Activated B cell treated with CpG ODN at 0.5 μM for 24 hours (primary cell): ENCODE measurements at regions of chr10 and their contacts with region 1.

Region 1: DNA sequence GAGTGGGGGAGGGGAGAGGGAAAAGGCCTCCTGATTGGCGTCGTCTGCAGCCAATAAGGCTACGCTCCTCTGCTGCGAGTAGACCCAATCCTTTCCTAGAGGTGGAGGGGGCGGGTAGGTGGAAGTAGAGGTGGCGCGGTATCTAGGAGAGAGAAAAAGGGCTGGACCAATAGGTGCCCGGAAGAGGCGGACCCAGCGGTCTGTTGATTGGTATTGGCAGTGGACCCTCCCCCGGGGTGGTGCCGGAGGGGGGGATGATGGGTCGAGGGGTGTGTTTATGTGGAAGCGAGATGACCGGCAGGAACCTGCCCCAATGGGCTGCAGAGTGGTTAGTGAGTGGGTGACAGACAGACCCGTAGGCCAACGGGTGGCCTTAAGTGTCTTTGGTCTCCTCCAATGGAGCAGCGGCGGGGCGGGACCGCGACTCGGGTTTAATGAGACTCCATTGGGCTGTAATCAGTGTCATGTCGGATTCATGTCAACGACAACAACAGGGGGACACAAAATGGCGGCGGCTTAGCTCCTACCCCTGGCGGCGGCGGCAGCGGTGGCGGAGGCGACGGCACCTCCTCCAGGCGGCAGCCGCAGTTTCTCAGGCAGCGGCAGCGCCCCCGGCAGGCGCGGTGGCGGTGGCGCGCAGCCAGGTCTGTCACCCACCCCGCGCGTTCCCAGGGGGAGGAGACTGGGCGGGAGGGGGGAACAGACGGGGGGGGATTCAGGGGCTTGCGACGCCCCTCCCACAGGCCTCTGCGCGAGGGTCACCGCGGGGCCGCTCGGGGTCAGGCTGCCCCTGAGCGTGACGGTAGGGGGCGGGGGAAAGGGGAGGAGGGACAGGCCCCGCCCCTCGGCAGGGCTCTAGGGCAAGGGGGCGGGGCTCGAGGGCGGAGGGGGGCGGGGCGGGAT is at the start of gene KAT6B:
- DNase-seq: peak; percentile 98
- ATAC-seq: peak; percentile 81
- H3K4me3 Mint-ChIP-seq: peak within 1 kb of the TSS; percentile 88
- H3K27ac Mint-ChIP-seq: peak within 1 kb of the TSS; percentile 96
- H3K4me1 Mint-ChIP-seq: peaks cover 44% of the 10 kb centered on the region
- H3K27me3 Mint-ChIP-seq: no peaks in the 10 kb centered on the region
- CTCF ChIP-seq: no peak
- total RNA-seq, gene KAT6B: 39.6 and 45.2 TPM in 2 replicates

Region 2: DNA sequence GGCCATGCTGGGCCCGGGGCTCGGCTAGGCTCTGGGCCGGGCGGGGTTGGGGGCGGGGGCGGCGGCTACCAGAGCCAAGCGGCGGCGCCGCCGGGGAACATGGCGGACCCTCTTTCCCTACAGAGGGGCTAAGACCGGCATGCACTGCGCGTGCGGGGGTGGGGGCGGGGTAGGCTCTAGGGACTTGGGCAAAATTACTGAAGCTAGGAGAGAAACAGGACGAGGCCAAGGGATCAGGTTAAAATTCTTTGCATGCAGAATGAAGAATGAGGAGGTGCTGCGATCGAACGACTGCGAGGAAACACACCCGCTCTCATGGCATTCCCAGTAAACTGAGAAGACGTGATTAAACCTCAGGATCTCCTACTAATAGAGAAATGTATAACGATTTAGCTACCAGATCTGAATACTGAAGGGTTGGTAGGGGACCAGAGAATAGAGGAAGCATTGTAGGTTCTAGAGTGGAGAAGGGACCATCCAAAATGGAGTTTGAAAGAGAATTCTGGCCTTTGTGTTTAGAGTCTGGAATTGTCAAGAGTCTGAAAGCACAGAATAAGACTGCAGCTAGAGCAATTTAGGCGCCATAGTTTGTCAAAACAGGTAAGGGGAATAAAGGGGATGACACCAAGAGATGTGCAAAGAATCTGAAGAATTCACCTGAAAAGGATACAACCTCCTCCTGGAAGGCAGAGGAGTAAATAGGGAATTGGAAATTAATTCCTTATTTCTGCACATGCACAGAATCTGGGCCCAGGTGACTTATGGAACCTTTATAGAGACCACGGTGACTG is 1330.3 kb before region 1 on chr10 and contains the start of gene PPP3CB:
- CTCF ChIA-PET with region 1: no interaction called
- POLR2A ChIA-PET with region 1: no interaction called
- intact Hi-C with region 1: loop called (anchors 10 kb)
- DNase-seq: no peak
- ATAC-seq: peak; percentile 73
- H3K4me3 Mint-ChIP-seq: peak within 1 kb of the TSS; percentile 92
- H3K27ac Mint-ChIP-seq: peak within 1 kb of the TSS; percentile 96
- H3K4me1 Mint-ChIP-seq: peaks cover 52% of the 10 kb centered on the region
- H3K27me3 Mint-ChIP-seq: no peaks in the 10 kb centered on the region
- CTCF ChIP-seq: no peak
- total RNA-seq, gene PPP3CB: 41.4 and 43.3 TPM in 2 replicates

Region 3: GRCh38 chr10:73997787-73998622 is 828.4 kb before region 1 on chr10 and contains the start of gene VCL:
- CTCF ChIA-PET with region 1: no interaction called
- POLR2A ChIA-PET with region 1: no interaction called
- intact Hi-C with region 1: loop called (anchors 5 kb)
- DNase-seq: peak; percentile 91
- ATAC-seq: peak; percentile 97
- H3K4me3 Mint-ChIP-seq: peak within 1 kb of the TSS; percentile 96
- H3K27ac Mint-ChIP-seq: peak within 1 kb of the TSS; percentile 95
- H3K4me1 Mint-ChIP-seq: peaks cover 45% of the 10 kb centered on the region
- H3K27me3 Mint-ChIP-seq: no peaks in the 10 kb centered on the region
- CTCF ChIP-seq: no peak
- total RNA-seq, gene VCL: 21.3 and 25.8 TPM in 2 replicates

Region 4: GRCh38 chr10:74262856-74263255 is 563.5 kb before region 1 on chr10:
- CTCF ChIA-PET with region 1: no interaction called
- POLR2A ChIA-PET with region 1: interaction called, 11 read pairs
- intact Hi-C with region 1: loop called (anchors 10 kb)
- DNase-seq: no peak
- ATAC-seq: no peak
- H3K4me3 Mint-ChIP-seq: no peak overlapping the region
- H3K27ac Mint-ChIP-seq: no peak overlapping the region
- H3K4me1 Mint-ChIP-seq: peaks cover 15% of the 10 kb centered on the region
- H3K27me3 Mint-ChIP-seq: no peaks in the 10 kb centered on the region
- CTCF ChIP-seq: no peak

Region 5: DNA sequence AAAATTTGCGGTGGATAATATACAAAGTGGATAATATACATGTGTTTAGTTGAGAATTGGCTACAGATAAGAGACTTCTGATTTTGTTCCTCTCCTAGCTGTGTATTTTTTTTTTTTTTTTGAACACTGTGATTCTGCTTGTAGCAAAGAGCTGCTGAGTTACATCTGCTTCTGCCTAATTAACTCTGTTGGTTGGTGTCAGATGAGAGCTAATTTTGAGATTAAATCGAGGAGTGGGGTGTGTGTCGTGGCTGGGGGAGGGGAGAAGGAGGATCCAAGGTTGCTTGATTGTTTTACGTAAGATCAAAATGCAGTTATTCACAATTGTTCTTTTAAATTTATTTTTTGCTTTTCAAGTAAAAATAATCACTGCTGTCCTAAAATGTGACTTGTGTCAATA is 11.3 kb after region 1 on chr10:
- CTCF ChIA-PET with region 1: no interaction called
- POLR2A ChIA-PET with region 1: interaction called, 19 read pairs
- intact Hi-C with region 1: no loop called
- DNase-seq: no peak
- ATAC-seq: no peak
- H3K4me3 Mint-ChIP-seq: no peak overlapping the region
- H3K27ac Mint-ChIP-seq: no peak overlapping the region
- H3K4me1 Mint-ChIP-seq: peaks cover 42% of the 10 kb centered on the region
- H3K27me3 Mint-ChIP-seq: no peaks in the 10 kb centered on the region
- CTCF ChIP-seq: no peak

Region 6: GRCh38 chr10:74871595-74872382 is 45.4 kb after region 1 on chr10:
- CTCF ChIA-PET with region 1: no interaction called
- POLR2A ChIA-PET with region 1: no interaction called
- intact Hi-C with region 1: no loop called
- DNase-seq: no peak
- ATAC-seq: peak; percentile 74
- H3K4me3 Mint-ChIP-seq: no peak overlapping the region
- H3K27ac Mint-ChIP-seq: no peak overlapping the region
- H3K4me1 Mint-ChIP-seq: peaks cover 55% of the 10 kb centered on the region
- H3K27me3 Mint-ChIP-seq: no peaks in the 10 kb centered on the region
- CTCF ChIP-seq: no peak

Region 7: GRCh38 chr10:75111367-75111906 is 285.0 kb after region 1 on chr10 and contains the start of gene SAMD8:
- CTCF ChIA-PET with region 1: no interaction called
- POLR2A ChIA-PET with region 1: interaction called, 8 read pairs
- intact Hi-C with region 1: loop called (anchors 1 kb)
- DNase-seq: peak; percentile 95
- ATAC-seq: peak; percentile 81
- H3K4me3 Mint-ChIP-seq: peak within 1 kb of the TSS; percentile 90
- H3K27ac Mint-ChIP-seq: peak within 1 kb of the TSS; percentile 90
- H3K4me1 Mint-ChIP-seq: peaks cover 45% of the 10 kb centered on the region
- H3K27me3 Mint-ChIP-seq: no peaks in the 10 kb centered on the region
- CTCF ChIP-seq: no peak
- total RNA-seq, gene SAMD8: 25.8 and 29.1 TPM in 2 replicates